ENCODE measurements at regions of chr1 and their contacts with region 1.

Region 1: GRCh38 chr1:99906535-99906934 is 56.4 kb downstream of the AGL start:
- DNase-seq: no peak

Region 2: DNA sequence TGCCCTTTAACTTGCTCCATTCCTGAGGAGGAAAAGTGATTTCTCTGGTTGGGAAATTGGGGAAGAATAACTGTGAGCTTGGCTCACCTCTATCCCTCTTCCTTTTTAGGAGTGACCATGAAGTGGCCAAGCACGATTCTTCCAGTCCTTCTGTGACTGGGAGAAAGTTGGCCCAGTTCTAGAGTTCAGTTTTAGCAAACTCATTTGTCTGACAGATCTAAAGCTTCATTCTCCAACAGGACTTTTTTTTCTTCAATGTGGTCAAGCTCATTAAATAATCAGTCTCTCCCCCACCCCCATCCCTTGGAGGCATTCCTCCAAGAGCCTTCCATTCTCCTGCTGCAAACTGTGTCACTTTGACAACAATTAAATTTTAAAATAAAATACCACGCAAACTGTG is 62.8 kb before region 1 on chr1:
- intact Hi-C with region 1: loop called in 1 of 2 experiments (anchors 2 kb)
- DNase-seq: no peak